SK-N-SH (cell line): ENCODE measurements at regions of chr3 and their contacts with region 1.

Region 1: GRCh38 chr3:159260049-159260662 is 458.3 kb downstream of the MFSD1 start:
- DNase-seq: peak; percentile 30
- H3K4me3 ChIP-seq: no peak overlapping the region; a peak in 1 of 4 replicates
- H3K27ac ChIP-seq: no peak overlapping the region
- H3K4me1 ChIP-seq: peaks cover 0 to 2% of the 10 kb centered on the region in 2 experiments; a peak in 1 of 4 replicates
- H3K27me3 ChIP-seq: no peaks in the 10 kb centered on the region
- CTCF ChIP-seq: peak; percentile 83
- EP300 ChIP-seq: no peak
- RAD21 ChIP-seq: peak; percentile 94

Region 2: DNA sequence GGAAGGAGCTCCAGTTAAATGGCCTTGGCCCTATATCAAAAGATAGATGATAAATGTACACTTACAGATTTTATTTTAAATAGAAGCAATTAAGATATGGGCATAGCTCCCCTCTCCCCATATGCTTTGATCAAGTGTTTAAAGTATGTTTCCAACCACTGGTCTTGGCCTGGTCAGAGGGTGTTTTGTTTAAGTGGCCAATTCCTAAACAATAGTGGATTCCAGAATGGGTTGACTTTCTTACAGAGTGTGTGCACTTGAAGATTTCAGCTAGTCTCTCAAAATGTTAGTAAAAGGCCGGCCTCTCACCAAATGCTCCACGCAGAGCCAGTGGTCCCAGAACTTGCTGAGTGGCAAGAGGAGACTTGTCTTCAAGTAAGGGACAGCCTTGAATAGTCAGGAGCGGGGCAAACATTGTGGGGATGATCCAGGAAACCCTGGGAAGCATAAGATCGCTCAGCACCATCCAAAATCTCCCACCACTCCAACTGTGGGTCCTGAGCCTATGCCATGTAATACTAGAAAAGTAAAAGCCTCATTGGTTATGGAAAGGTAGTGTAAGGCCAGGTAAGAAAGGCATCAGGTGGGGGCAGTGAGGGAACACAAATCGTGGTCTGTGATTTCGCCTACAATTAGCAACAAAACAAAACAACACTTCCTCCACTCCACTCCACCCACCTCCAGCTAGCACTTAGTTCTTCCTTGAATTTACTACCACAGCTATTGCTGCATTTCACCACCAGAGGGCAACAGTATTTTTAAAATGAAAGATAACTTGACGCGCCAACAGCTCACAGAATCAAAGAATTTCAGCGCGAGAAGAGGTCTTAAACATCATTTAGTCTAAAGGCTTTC is 532.7 kb before region 1 on chr3:
- CTCF ChIA-PET with region 1: interaction called, 11 read pairs
- POLR2A ChIA-PET with region 1: no interaction called
- DNase-seq: peak; percentile 75
- H3K4me3 ChIP-seq: no peak overlapping the region; a peak in 1 of 4 replicates
- H3K27ac ChIP-seq: no peak overlapping the region
- H3K4me1 ChIP-seq: peaks cover 17 to 20% of the 10 kb centered on the region in 2 experiments; a peak in 3 of 4 replicates
- H3K27me3 ChIP-seq: no peaks in the 10 kb centered on the region
- CTCF ChIP-seq: peak; percentile 88
- EP300 ChIP-seq: no peak
- RAD21 ChIP-seq: peak; percentile 79

Region 3: GRCh38 chr3:158912188-158912587 is 348.0 kb before region 1 on chr3:
- CTCF ChIA-PET with region 1: interaction called, 108 read pairs
- POLR2A ChIA-PET with region 1: no interaction called
- DNase-seq: no peak
- H3K4me3 ChIP-seq: no peak overlapping the region
- H3K27ac ChIP-seq: no peak overlapping the region
- H3K4me1 ChIP-seq: peaks cover 0 to 2% of the 10 kb centered on the region in 2 experiments; a peak in 1 of 4 replicates
- H3K27me3 ChIP-seq: no peaks in the 10 kb centered on the region
- CTCF ChIP-seq: peak; percentile 33; the same call in 1 of the 2 replicates
- EP300 ChIP-seq: no peak
- RAD21 ChIP-seq: no peak

Region 4: GRCh38 chr3:158925021-158925420 is 335.1 kb before region 1 on chr3:
- CTCF ChIA-PET with region 1: interaction called, 108 read pairs
- POLR2A ChIA-PET with region 1: no interaction called
- DNase-seq: no peak
- H3K4me3 ChIP-seq: no peak overlapping the region
- H3K27ac ChIP-seq: no peak overlapping the region
- H3K4me1 ChIP-seq: peaks cover 0 to 6% of the 10 kb centered on the region in 2 experiments; a peak in 1 of 4 replicates
- H3K27me3 ChIP-seq: no peaks in the 10 kb centered on the region
- CTCF ChIP-seq: no peak
- EP300 ChIP-seq: no peak
- RAD21 ChIP-seq: no peak

Region 5: GRCh38 chr3:159280386-159281191 is 20.4 kb after region 1 on chr3:
- CTCF ChIA-PET with region 1: interaction called, 16 read pairs
- POLR2A ChIA-PET with region 1: no interaction called
- DNase-seq: peak; percentile 38
- H3K4me3 ChIP-seq: no peak overlapping the region
- H3K27ac ChIP-seq: peak overlapping the region in 1 of 2 experiments; percentile 77; a peak in 2 of 4 replicates
- H3K4me1 ChIP-seq: peaks cover 0 to 9% of the 10 kb centered on the region in 2 experiments; a peak in 3 of 4 replicates
- H3K27me3 ChIP-seq: no peaks in the 10 kb centered on the region
- CTCF ChIP-seq: no peak
- EP300 ChIP-seq: peak in 1 of 2 experiments; percentile 22; a peak in 1 of 4 replicates
- RAD21 ChIP-seq: peak; percentile 29; the same call in 1 of the 2 replicates

Region 6: GRCh38 chr3:159804726-159805410 is 544.7 kb after region 1 on chr3:
- CTCF ChIA-PET with region 1: interaction called, 135 read pairs
- POLR2A ChIA-PET with region 1: no interaction called
- DNase-seq: peak; percentile 71
- H3K4me3 ChIP-seq: no peak overlapping the region; a peak in 1 of 4 replicates
- H3K27ac ChIP-seq: no peak overlapping the region
- H3K4me1 ChIP-seq: peaks cover 0 to 2% of the 10 kb centered on the region in 2 experiments; a peak in 1 of 4 replicates
- H3K27me3 ChIP-seq: no peaks in the 10 kb centered on the region
- CTCF ChIP-seq: peak; percentile 95
- EP300 ChIP-seq: no peak
- RAD21 ChIP-seq: peak; percentile 99